ENCODE measurements at regions of chr10 and their contacts with region 1.

Region 1: GRCh38 chr10:69716711-69717560 is 84.8 kb upstream of the COL13A1 start:
- DNase-seq: no peak
- H3K4me3 ChIP-seq: no peak overlapping the region
- H3K27ac ChIP-seq: peak overlapping the region; percentile 52 to 82
- H3K4me1 ChIP-seq: peaks cover 11 to 14% of the 10 kb centered on the region in 2 donors
- H3K27me3 ChIP-seq: no peaks in the 10 kb centered on the region
- CTCF ChIP-seq: peak; percentile 38 to 70 (median 50)

Region 2: GRCh38 chr10:69418052-69418752 is 298.7 kb before region 1 on chr10:
- intact Hi-C with region 1: no loop called
- DNase-seq: no peak
- H3K4me3 ChIP-seq: no peak overlapping the region
- H3K27ac ChIP-seq: no peak overlapping the region
- H3K4me1 ChIP-seq: peaks cover 0 to 2% of the 10 kb centered on the region in 2 donors
- H3K27me3 ChIP-seq: no peaks in the 10 kb centered on the region
- CTCF ChIP-seq: no peak

Region 3: GRCh38 chr10:69644658-69645295 is 72.2 kb before region 1 on chr10:
- intact Hi-C with region 1: loop called (anchors 1 kb)
- DNase-seq: peak in 1 of 2 donors; percentile 75
- H3K4me3 ChIP-seq: no peak overlapping the region
- H3K27ac ChIP-seq: no peak overlapping the region
- H3K4me1 ChIP-seq: peaks cover 0 to 5% of the 10 kb centered on the region in 2 donors
- H3K27me3 ChIP-seq: no peaks in the 10 kb centered on the region
- CTCF ChIP-seq: peak; percentile 76 to 90 (median 82)

Region 4: DNA sequence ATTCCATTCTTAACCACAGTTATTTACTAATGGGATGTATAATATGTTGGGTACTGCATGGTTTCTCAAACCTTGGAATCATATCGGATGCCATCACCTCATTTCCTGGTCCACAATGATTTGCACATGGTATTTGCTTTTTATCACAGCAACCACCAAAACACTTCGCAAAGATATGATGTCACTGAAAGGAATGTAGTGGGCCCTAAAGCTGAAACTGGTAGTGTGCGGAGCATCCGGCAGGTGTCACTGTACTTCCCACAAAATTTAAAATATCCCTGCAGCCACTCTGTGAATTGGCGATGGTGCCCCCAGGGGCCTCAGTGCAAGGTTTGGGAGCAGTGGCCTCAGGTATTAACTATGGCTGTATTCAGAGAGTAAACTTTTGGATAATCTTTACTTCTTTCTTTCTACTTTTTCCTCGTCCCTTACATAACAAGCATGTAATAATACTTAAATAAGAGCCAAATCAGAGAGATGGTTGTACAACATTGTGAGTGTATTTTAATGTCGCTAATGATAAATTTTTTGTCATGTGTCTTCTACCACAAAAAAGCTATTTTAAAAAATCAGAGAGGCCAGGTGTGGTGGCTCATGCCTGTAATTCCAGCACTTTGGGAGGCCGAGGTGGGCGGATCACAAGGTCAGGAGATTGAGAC is 20.7 kb before region 1 on chr10:
- intact Hi-C with region 1: loop called (anchors 2 kb)
- DNase-seq: no peak
- H3K4me3 ChIP-seq: no peak overlapping the region
- H3K27ac ChIP-seq: no peak overlapping the region
- H3K4me1 ChIP-seq: no peaks in the 10 kb centered on the region
- H3K27me3 ChIP-seq: no peaks in the 10 kb centered on the region
- CTCF ChIP-seq: peak; percentile 35 to 55 (median 47)

Region 5: DNA sequence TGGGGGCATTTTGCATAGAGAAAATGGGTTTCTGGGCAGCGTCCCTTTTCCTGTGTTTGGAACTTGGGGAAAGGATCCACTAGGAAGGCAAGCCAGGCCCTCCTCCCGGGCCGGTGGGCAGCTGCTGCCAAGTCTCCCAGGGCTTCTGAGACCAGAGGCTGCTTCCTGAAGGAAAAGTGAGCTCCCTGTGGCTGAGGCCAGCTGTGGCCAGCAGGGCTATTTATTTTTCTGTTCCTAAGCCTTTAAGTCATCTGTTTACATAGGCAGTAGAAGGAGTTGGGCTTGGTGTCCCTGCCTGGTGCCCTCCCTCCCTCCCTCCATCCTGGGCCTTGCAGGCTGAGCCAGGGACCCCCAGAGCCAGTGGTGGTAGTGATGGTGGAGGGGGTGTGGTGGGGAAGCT is 14.2 kb after region 1 on chr10:
- intact Hi-C with region 1: loop called (anchors 2 kb)
- DNase-seq: peak in 1 of 2 donors; percentile 84
- H3K4me3 ChIP-seq: no peak overlapping the region
- H3K27ac ChIP-seq: peak overlapping the region; percentile 92 to 93
- H3K4me1 ChIP-seq: peaks cover 45 to 62% of the 10 kb centered on the region in 2 donors
- H3K27me3 ChIP-seq: no peaks in the 10 kb centered on the region
- CTCF ChIP-seq: peak; percentile 15 to 22 (median 18)

Region 6: DNA sequence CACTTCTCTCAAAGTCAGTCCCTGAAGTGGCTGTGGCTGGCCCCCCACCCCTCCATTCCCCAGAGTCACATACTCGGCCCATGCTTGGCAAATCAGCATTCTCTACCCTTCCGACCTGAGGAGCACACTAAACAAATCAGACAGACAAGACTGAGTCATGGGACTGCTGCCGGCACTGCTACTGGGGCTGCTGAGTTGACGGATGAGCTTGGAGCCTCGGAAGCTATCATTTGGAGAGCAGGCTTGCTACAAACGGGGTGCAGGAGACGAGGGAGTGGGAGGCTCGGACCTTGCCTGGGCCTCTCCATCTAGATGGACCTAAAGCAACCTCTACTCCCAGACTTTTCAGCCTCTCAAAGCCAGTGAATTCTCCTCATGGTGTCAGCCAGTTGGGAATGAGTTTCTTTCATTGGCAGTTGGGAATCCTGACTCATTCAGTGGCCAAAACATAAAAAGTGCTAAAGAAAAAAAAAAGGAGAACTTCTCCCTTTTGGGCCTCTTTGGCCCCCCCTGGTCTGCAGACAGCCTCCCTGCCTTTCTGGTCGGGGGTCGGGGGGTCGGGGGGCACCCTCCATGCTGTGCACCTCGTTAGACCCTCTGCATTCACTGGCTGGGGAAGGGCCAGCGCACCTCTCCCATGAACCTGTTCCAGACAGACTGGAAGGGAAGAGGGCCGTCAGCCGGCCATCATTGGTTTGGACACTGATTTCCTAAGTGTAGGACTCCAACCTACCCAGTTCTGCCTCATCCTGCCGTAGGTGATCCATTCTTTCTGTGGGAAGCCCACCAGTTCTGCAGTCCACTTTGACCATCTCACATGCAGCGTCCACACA is 32.5 kb after region 1 on chr10:
- intact Hi-C with region 1: no loop called
- DNase-seq: no peak
- H3K4me3 ChIP-seq: no peak overlapping the region
- H3K27ac ChIP-seq: peak overlapping the region in 1 of 2 donors; percentile 19
- H3K4me1 ChIP-seq: peaks cover 0 to 9% of the 10 kb centered on the region in 2 donors
- H3K27me3 ChIP-seq: no peaks in the 10 kb centered on the region
- CTCF ChIP-seq: no peak